Activated CD8-positive, alpha-beta memory T cell treated with anti-CD3 and anti-CD28 coated beads, Interleukin-2, amount 10 ng/mL, durations not matched to agents 7 days and 5 days (primary cell): ENCODE measurements at regions of chr16 and their contacts with region 1.

Region 1: DNA sequence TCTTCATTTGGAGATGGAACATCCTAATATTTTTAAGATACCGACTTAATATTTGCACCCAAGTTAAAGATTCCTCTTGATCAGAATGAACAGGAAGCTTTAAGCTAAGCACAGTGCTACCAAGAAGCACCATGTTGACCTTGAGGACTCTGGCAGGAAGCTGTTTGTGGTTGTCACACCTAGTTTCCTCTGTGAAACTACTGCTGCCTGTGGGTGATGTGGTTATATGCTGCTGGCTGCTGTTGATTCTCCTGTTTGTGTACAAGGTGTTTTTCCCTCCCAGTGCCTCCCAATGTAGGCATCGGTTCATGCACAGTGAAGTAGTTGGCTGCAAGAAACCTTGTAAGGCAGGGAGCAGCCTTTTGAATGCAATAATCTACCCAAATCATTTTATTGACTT is 23.4 kb downstream of the RBL2 start:
- DNase-seq: peak; percentile 93
- ATAC-seq: peak; percentile 84
- H3K4me3 Mint-ChIP-seq: peak overlapping the region; percentile 79
- H3K27ac Mint-ChIP-seq: peak overlapping the region; percentile 89
- H3K4me1 Mint-ChIP-seq: peaks cover 81% of the 10 kb centered on the region
- H3K27me3 Mint-ChIP-seq: no peaks in the 10 kb centered on the region

Region 2: GRCh38 chr16:53415504-53415903 is 42.2 kb before region 1 on chr16:
- CTCF ChIA-PET with region 1: no interaction called
- DNase-seq: no peak
- ATAC-seq: no peak
- H3K4me3 Mint-ChIP-seq: no peak overlapping the region
- H3K27ac Mint-ChIP-seq: no peak overlapping the region
- H3K4me1 Mint-ChIP-seq: peaks cover 4% of the 10 kb centered on the region
- H3K27me3 Mint-ChIP-seq: no peaks in the 10 kb centered on the region

Region 3: DNA sequence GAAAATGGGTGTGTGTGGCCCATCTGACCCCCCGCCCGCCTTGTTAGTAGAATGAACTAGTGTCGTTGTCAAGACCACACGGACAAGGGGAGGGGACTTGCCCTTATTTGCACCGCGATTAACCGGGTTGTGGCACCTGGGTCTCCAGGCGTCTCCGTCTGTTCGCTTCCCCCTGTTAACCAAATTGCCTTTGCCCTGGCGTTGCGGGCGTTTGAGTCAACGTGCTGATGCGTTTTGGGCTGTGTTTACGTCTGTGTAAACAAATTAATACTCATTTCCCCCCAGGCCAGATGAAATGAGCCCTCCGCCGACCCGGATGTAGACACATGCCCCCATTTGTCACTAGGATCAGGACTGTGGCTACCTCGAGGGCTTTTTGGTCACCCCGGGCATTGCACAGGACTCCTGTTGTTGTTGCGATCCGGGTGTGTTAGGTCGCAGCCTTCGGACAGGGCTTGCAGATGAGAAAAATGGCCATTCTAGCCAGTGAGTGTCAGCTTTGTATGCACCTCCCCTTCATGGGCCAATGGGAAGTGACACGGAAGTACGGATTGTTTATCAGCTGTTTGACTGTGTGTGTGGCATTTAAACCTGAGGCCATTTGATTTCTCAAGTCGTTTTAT is 22.5 kb before region 1 on chr16:
- CTCF ChIA-PET with region 1: interaction called, 12 read pairs
- DNase-seq: peak; percentile 84
- ATAC-seq: peak; percentile 79
- H3K4me3 Mint-ChIP-seq: peak overlapping the region; percentile 94
- H3K27ac Mint-ChIP-seq: peak overlapping the region; percentile 91
- H3K4me1 Mint-ChIP-seq: peaks cover 40% of the 10 kb centered on the region
- H3K27me3 Mint-ChIP-seq: no peaks in the 10 kb centered on the region

Region 4: DNA sequence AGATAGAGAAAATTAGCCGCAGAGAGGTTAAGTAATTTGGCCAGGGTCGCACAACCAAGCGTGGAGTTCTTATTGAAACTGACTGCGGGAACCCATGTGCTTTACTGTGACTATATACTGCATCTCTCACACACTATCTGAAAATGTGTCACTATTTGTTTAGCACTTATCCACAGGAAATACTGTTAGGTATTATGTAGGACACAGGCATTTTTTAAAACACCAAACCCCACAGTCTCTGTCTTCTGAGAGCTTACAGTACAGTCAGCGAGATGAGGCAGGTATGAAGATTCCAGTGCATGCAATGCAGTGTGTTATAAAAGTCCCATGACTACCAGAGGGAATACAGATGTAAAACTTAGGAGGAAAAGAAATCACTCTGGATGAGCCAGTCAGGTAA is 12.1 kb before region 1 on chr16:
- CTCF ChIA-PET with region 1: interaction called, 30 read pairs
- DNase-seq: no peak
- ATAC-seq: peak; percentile 78
- H3K4me3 Mint-ChIP-seq: peak overlapping the region; percentile 62
- H3K27ac Mint-ChIP-seq: peak overlapping the region; percentile 81
- H3K4me1 Mint-ChIP-seq: peaks cover 29% of the 10 kb centered on the region
- H3K27me3 Mint-ChIP-seq: no peaks in the 10 kb centered on the region

Region 5: DNA sequence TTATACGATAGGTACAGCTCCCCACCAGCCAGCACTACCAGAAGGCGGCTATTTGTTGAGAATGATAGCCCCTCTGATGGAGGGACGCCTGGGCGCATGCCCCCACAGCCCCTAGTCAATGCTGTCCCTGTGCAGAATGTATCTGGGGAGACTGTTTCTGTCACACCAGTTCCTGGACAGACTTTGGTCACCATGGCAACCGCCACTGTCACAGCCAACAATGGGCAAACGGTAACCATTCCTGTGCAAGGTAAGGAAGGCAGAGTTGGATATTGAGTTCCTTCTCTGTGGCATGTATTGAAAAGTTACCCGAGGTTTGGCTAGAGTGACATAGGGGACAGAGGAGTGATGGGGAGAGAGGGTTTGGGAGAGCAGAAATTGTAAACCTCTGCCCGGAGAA is 12.3 kb after region 1 on chr16:
- CTCF ChIA-PET with region 1: no interaction called
- DNase-seq: no peak
- ATAC-seq: no peak
- H3K4me3 Mint-ChIP-seq: no peak overlapping the region
- H3K27ac Mint-ChIP-seq: peak overlapping the region; percentile 15
- H3K4me1 Mint-ChIP-seq: peaks cover 16% of the 10 kb centered on the region
- H3K27me3 Mint-ChIP-seq: no peaks in the 10 kb centered on the region

Region 6: GRCh38 chr16:53583401-53583800 is 125.7 kb after region 1 on chr16:
- CTCF ChIA-PET with region 1: no interaction called
- DNase-seq: no peak
- ATAC-seq: no peak
- H3K4me3 Mint-ChIP-seq: no peak overlapping the region
- H3K27ac Mint-ChIP-seq: no peak overlapping the region
- H3K4me1 Mint-ChIP-seq: no peaks in the 10 kb centered on the region
- H3K27me3 Mint-ChIP-seq: no peaks in the 10 kb centered on the region